Naive thymus-derived CD4-positive, alpha-beta T cell (primary cell): ENCODE measurements at regions of chr19 and their contacts with region 1.

Region 1: DNA sequence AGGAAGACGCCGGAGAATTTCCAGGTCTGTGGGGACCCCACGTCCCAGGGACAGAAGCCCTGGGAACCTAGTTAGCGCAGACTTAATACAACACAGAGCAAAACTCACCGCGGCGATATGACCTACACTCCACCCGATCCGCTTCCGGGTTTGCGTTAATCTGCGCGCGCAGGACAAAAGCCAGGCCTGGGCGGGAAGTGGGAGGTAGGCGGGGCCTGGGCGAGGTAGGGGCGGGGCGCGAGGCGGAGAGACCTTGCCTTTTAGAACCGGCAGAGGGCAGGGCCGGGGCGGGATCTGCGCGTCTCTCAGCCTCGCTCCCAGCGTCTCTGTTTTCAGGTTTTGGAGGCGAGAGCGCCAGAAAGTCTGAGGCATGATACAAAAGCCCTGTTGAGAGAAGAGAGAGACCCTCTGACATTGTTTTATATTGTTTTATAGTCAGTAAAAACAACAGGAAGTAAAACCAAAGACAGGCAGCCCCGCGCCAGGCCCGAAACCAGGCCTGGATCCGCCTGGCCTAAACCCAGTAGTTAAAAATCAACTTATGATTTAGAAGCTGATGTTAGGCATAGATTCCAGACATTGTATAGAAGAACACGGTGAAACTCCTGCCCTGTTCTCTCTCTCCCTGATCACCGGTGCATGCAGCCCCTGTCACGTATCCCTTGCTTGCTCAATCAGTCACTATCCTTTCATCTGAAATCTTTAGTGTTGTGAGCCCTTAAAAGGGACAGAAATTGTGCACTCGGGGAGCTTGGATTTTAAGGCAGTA is at the start of gene ZNF611:
- DNase-seq: peak; percentile 97 to 100 (median 98)
- ATAC-seq: peak; percentile 98
- H3K4me3 ChIP-seq: peak within 1 kb of the TSS; percentile 99
- H3K4me3 Mint-ChIP-seq: peak within 1 kb of the TSS; percentile 85 to 96 (median 93)
- H3K27ac ChIP-seq: peak within 1 kb of the TSS; percentile 95
- H3K27ac Mint-ChIP-seq: peak within 1 kb of the TSS; percentile 92 to 98 (median 95)
- H3K4me1 ChIP-seq: peaks cover 0 to 8% of the 10 kb centered on the region in 2 donors
- H3K4me1 Mint-ChIP-seq: peaks cover 14 to 32% (median 24%) of the 10 kb centered on the region in 7 donors
- H3K27me3 ChIP-seq: no peaks in the 10 kb centered on the region
- H3K27me3 Mint-ChIP-seq: no peaks in the 10 kb centered on the region
- total RNA-seq, gene ZNF611: 23.4 to 56.0 (median 36.8) TPM

Region 2: DNA sequence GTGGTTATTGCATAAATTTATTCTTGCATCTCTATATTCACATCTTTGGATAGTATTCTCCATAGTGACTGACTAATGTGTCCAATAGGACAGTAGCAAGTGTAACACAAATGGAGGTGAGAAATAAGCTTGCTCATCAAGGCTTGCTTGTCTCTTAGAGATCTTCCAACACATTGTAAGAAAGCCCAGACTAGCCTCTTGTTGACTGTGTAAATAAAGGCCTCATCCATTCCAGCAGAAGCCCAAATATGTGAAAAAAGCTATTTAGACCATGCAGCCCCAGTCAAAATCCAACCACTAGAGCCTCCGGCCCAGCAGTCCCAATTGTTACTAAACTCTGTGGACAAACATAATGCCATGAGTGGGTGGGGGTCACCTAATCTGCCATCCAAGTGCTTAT is 724.4 kb before region 1 on chr19:
- CTCF ChIA-PET with region 1: no interaction called
- POLR2A ChIA-PET with region 1: no interaction called
- intact Hi-C with region 1: no loop called
- DNase-seq: no peak
- ATAC-seq: no peak
- H3K4me3 ChIP-seq: no peak overlapping the region
- H3K4me3 Mint-ChIP-seq: peak overlapping the region in 2 of 10 donors; percentile 19 to 23
- H3K27ac ChIP-seq: no peak overlapping the region
- H3K27ac Mint-ChIP-seq: no peak overlapping the region
- H3K4me1 ChIP-seq: peaks cover 7% of the 10 kb centered on the region in 2 donors
- H3K4me1 Mint-ChIP-seq: peaks cover 15 to 28% (median 21%) of the 10 kb centered on the region in 7 donors
- H3K27me3 ChIP-seq: no peaks in the 10 kb centered on the region
- H3K27me3 Mint-ChIP-seq: no peaks in the 10 kb centered on the region

Region 3: DNA sequence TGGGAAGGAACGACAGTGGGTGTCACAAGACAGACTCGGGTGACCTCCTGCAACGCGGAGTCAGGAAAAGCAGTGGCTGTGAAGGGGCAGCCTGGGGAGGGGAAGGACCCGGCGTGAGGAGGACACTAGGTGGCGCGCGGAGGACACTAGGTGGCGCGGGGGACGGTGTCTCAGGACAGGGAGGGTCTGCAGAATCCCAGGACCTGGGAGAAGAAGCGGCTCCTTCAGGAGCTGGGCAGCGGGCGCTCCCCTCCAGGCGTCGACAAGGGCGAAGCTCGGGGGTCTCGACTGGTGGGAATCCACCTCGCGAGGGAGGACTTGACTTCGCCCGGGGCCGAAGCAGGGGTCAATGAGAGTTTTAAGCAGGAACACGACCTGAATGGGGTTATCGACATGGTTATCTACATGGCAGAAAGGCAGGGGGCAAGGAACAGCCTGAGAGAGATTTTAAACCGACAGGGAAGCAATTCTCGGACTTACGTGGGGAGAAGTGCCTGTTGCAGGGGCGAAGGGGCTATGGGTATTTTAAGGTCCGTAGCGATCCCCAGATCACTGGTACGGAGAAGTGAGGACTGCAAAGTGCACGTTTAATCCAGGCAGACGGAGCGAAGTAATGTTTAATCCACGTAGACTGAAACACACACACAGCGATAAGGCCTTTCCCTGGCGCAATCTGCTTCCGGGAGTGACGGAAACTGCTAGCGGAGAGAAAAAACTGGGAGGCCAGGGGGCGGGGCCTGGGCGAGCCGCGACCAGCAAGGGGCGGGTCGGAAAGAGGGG is 595.6 kb before region 1 on chr19 and contains the start of gene ZNF616:
- CTCF ChIA-PET with region 1: no interaction called
- POLR2A ChIA-PET with region 1: no interaction called
- intact Hi-C with region 1: loop called in 1 of 2 experiments (anchors 1 kb)
- DNase-seq: peak; percentile 58 to 97 (median 95)
- ATAC-seq: peak; percentile 74
- H3K4me3 ChIP-seq: peak within 1 kb of the TSS; percentile 99
- H3K4me3 Mint-ChIP-seq: peak within 1 kb of the TSS; percentile 92 to 99 (median 96)
- H3K27ac ChIP-seq: peak within 1 kb of the TSS; percentile 89
- H3K27ac Mint-ChIP-seq: peak within 1 kb of the TSS; percentile 88 to 98 (median 96)
- H3K4me1 ChIP-seq: peaks cover 15 to 18% of the 10 kb centered on the region in 2 donors
- H3K4me1 Mint-ChIP-seq: peaks cover 20 to 44% (median 33%) of the 10 kb centered on the region in 7 donors
- H3K27me3 ChIP-seq: no peaks in the 10 kb centered on the region
- H3K27me3 Mint-ChIP-seq: no peaks in the 10 kb centered on the region
- total RNA-seq, gene ZNF616: 2.8 to 18.5 (median 6.1) TPM

Region 4: GRCh38 chr19:52535771-52536447 is 199.2 kb before region 1 on chr19:
- CTCF ChIA-PET with region 1: no interaction called
- POLR2A ChIA-PET with region 1: no interaction called
- intact Hi-C with region 1: loop called in 1 of 2 experiments (anchors 2 kb)
- DNase-seq: peak; percentile 60 to 87 (median 82)
- ATAC-seq: peak; percentile 99
- H3K4me3 ChIP-seq: peak overlapping the region; percentile 84
- H3K4me3 Mint-ChIP-seq: peak overlapping the region; percentile 83 to 99 (median 90)
- H3K27ac ChIP-seq: peak overlapping the region; percentile 87
- H3K27ac Mint-ChIP-seq: peak overlapping the region; percentile 69 to 95 (median 87)
- H3K4me1 ChIP-seq: no peaks in the 10 kb centered on the region
- H3K4me1 Mint-ChIP-seq: peaks cover 16 to 44% (median 34%) of the 10 kb centered on the region in 7 donors
- H3K27me3 ChIP-seq: no peaks in the 10 kb centered on the region
- H3K27me3 Mint-ChIP-seq: no peaks in the 10 kb centered on the region

Region 5: GRCh38 chr19:52637718-52638585 is 97.1 kb before region 1 on chr19 and contains the start of gene ZNF83:
- CTCF ChIA-PET with region 1: no interaction called
- POLR2A ChIA-PET with region 1: no interaction called
- intact Hi-C with region 1: loop called (anchors 1 kb)
- DNase-seq: peak; percentile 81 to 97 (median 92)
- ATAC-seq: peak; percentile 99
- H3K4me3 ChIP-seq: peak within 1 kb of the TSS; percentile 86
- H3K4me3 Mint-ChIP-seq: peak within 1 kb of the TSS; percentile 92 to 98 (median 95)
- H3K27ac ChIP-seq: peak within 1 kb of the TSS; percentile 99
- H3K27ac Mint-ChIP-seq: peak within 1 kb of the TSS; percentile 94 to 98 (median 97)
- H3K4me1 ChIP-seq: peaks cover 7 to 8% of the 10 kb centered on the region in 2 donors
- H3K4me1 Mint-ChIP-seq: peaks cover 11 to 27% (median 20%) of the 10 kb centered on the region in 7 donors
- H3K27me3 ChIP-seq: no peaks in the 10 kb centered on the region
- H3K27me3 Mint-ChIP-seq: no peaks in the 10 kb centered on the region
- total RNA-seq, gene ZNF83: 49.7 to 113 (median 70.5) TPM

Region 6: GRCh38 chr19:52722062-52723003 is 12.7 kb before region 1 on chr19:
- CTCF ChIA-PET with region 1: no interaction called
- POLR2A ChIA-PET with region 1: no interaction called
- intact Hi-C with region 1: no loop called
- DNase-seq: no peak
- ATAC-seq: no peak
- H3K4me3 ChIP-seq: no peak overlapping the region
- H3K4me3 Mint-ChIP-seq: no peak overlapping the region
- H3K27ac ChIP-seq: no peak overlapping the region
- H3K27ac Mint-ChIP-seq: no peak overlapping the region
- H3K4me1 ChIP-seq: no peaks in the 10 kb centered on the region
- H3K4me1 Mint-ChIP-seq: peaks cover 0 to 11% (median 8%) of the 10 kb centered on the region in 7 donors
- H3K27me3 ChIP-seq: no peaks in the 10 kb centered on the region
- H3K27me3 Mint-ChIP-seq: no peaks in the 10 kb centered on the region

Region 7: GRCh38 chr19:52761696-52762095 is 26.6 kb after region 1 on chr19:
- CTCF ChIA-PET with region 1: no interaction called
- POLR2A ChIA-PET with region 1: no interaction called
- intact Hi-C with region 1: no loop called
- DNase-seq: no peak
- ATAC-seq: no peak
- H3K4me3 ChIP-seq: no peak overlapping the region
- H3K4me3 Mint-ChIP-seq: no peak overlapping the region
- H3K27ac ChIP-seq: no peak overlapping the region
- H3K27ac Mint-ChIP-seq: no peak overlapping the region
- H3K4me1 ChIP-seq: no peaks in the 10 kb centered on the region
- H3K4me1 Mint-ChIP-seq: no peaks in the 10 kb centered on the region
- H3K27me3 ChIP-seq: no peaks in the 10 kb centered on the region
- H3K27me3 Mint-ChIP-seq: no peaks in the 10 kb centered on the region

Region 8: GRCh38 chr19:52786457-52787359 is 51.6 kb after region 1 on chr19 and contains the start of gene ZNF600:
- CTCF ChIA-PET with region 1: no interaction called
- POLR2A ChIA-PET with region 1: no interaction called
- intact Hi-C with region 1: loop called in 1 of 2 experiments (anchors 2 kb)
- DNase-seq: peak; percentile 33 to 65 (median 45)
- ATAC-seq: peak; percentile 98
- H3K4me3 ChIP-seq: peak within 1 kb of the TSS; percentile 60
- H3K4me3 Mint-ChIP-seq: peak within 1 kb of the TSS; percentile 83 to 96 (median 92)
- H3K27ac ChIP-seq: peak within 1 kb of the TSS; percentile 70
- H3K27ac Mint-ChIP-seq: peak within 1 kb of the TSS; percentile 28 to 97 (median 81)
- H3K4me1 ChIP-seq: peaks cover 0 to 3% of the 10 kb centered on the region in 2 donors
- H3K4me1 Mint-ChIP-seq: peaks cover 19 to 35% (median 32%) of the 10 kb centered on the region in 7 donors
- H3K27me3 ChIP-seq: no peaks in the 10 kb centered on the region
- H3K27me3 Mint-ChIP-seq: no peaks in the 10 kb centered on the region
- total RNA-seq, gene ZNF600: 6.7 to 30.0 (median 19.8) TPM

Region 9: DNA sequence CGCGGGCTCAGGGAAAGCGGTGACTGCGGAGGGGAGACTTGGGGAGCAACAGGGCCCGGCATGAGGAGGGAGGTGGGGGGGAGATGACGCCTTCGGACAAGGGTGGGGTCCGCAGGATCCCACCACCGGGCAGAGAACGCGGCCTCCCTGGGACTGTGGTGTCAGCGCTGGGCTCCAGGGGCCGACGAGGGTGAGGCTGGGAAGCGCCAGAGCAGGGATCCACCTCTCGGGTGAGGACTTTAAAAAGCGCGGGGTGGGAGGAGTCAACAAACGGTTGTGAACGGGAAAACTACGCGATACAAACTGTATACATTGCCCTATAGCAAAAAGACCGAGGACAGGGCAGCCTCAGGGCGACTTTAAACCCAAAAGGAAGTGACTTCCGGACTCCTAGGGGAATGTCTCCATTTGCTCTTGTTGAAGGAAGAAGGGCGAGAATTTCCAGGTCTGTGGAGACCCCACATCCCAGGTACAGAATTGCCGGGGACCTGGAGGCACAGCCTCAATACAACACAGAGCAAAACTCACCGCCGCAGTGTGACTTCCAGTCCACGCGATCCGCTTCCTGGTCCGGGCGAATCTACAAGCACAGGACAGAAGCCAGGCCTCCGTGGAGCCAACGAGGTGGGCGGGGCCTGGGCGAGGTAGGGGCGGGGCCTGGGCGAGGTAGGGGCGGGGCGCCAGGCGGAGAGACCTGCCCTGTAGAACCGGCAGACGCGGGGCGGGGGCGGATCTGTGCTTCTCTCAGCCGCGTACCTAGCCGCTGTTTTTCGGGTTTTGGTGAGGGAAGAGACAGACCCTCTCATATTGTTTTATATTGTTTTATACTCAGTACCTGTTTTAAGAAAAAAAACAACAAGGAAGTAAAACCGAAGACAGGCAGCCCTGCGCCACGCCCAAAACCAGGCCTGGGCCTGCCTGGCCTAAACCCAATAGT is 188.0 kb after region 1 on chr19 and contains the start of gene ZNF888:
- CTCF ChIA-PET with region 1: no interaction called
- POLR2A ChIA-PET with region 1: no interaction called
- intact Hi-C with region 1: no loop called
- DNase-seq: peak; percentile 52 to 89 (median 78)
- ATAC-seq: peak; percentile 100
- H3K4me3 ChIP-seq: peak within 1 kb of the TSS; percentile 87
- H3K4me3 Mint-ChIP-seq: peak within 1 kb of the TSS; percentile 80 to 94 (median 92)
- H3K27ac ChIP-seq: peak within 1 kb of the TSS; percentile 77
- H3K27ac Mint-ChIP-seq: peak within 1 kb of the TSS; percentile 23 to 93 (median 91)
- H3K4me1 ChIP-seq: no peaks in the 10 kb centered on the region
- H3K4me1 Mint-ChIP-seq: peaks cover 11 to 37% (median 24%) of the 10 kb centered on the region in 7 donors
- H3K27me3 ChIP-seq: no peaks in the 10 kb centered on the region
- H3K27me3 Mint-ChIP-seq: peaks cover 0 to 11% (median 6%) of the 10 kb centered on the region in 5 donors
- total RNA-seq, gene ZNF888: 2.1 to 7.2 (median 6.0) TPM

Region 10: DNA sequence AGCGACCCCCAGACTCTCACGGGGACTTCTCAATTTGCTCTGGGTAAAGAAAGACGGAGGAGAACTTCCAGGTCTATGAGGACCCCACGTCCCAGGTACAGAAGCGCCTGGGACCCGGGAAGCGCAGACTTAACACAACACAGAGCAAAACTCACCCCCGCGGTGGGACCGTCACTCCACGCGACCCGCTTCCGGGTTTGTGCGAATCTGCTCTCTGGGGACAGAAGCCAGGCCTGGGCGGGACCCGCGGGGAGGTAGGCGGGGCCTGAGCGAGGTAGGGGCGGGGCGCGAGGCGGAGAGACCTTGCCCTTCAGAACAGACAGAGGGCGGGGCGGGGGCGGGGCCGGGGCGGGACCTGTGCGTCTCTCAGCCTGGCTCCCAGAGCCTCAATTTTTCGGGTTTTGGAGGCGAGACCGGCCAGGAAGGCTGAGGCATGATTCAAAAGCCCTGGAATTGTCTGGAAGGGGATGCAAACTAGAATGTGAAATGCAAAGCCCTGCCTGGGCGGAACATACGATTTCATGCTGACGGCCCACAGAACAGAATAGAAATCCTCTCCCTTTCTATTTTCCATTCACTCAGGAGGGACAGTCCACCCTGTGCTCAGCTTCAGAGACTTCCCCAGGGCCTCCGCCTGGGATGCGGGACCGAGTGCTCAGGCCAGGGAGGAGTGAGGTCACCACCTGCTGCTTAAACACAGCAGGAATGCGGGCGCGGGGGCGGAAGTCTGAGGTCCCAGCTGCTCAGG is 207.5 kb after region 1 on chr19:
- CTCF ChIA-PET with region 1: no interaction called
- POLR2A ChIA-PET with region 1: no interaction called
- intact Hi-C with region 1: loop called in 1 of 2 experiments (anchors 1 kb)
- DNase-seq: peak; percentile 88 to 99 (median 95)
- ATAC-seq: peak; percentile 100
- H3K4me3 ChIP-seq: peak overlapping the region; percentile 98
- H3K4me3 Mint-ChIP-seq: peak overlapping the region; percentile 87 to 95 (median 92)
- H3K27ac ChIP-seq: peak overlapping the region; percentile 85
- H3K27ac Mint-ChIP-seq: peak overlapping the region; percentile 33 to 94 (median 89)
- H3K4me1 ChIP-seq: peaks cover 0 to 4% of the 10 kb centered on the region in 2 donors
- H3K4me1 Mint-ChIP-seq: peaks cover 12 to 27% (median 16%) of the 10 kb centered on the region in 7 donors
- H3K27me3 ChIP-seq: no peaks in the 10 kb centered on the region
- H3K27me3 Mint-ChIP-seq: no peaks in the 10 kb centered on the region